Activated CD4-positive, alpha-beta memory T cell treated with anti-CD3 and anti-CD28 coated beads for 36 hours (primary cell): ENCODE measurements at regions of chr22 and their contacts with region 1.

Region 1: GRCh38 chr22:40463017-40463631 is 92.7 kb downstream of the SGSM3 start:
- DNase-seq: peak; percentile 69
- H3K4me3 Mint-ChIP-seq: peak overlapping the region; percentile 94
- H3K27ac Mint-ChIP-seq: peak overlapping the region; percentile 95
- H3K4me1 Mint-ChIP-seq: peaks cover 66% of the 10 kb centered on the region
- H3K27me3 Mint-ChIP-seq: no peaks in the 10 kb centered on the region

Region 2: GRCh38 chr22:40400159-40400558 is 63.0 kb before region 1 on chr22:
- CTCF ChIA-PET with region 1: no interaction called
- POLR2A ChIA-PET with region 1: no interaction called
- intact Hi-C with region 1: loop called (anchors 1 kb)
- DNase-seq: peak; percentile 75
- H3K4me3 Mint-ChIP-seq: no peak overlapping the region
- H3K27ac Mint-ChIP-seq: peak overlapping the region; percentile 70
- H3K4me1 Mint-ChIP-seq: peaks cover 61% of the 10 kb centered on the region
- H3K27me3 Mint-ChIP-seq: no peaks in the 10 kb centered on the region

Region 3: DNA sequence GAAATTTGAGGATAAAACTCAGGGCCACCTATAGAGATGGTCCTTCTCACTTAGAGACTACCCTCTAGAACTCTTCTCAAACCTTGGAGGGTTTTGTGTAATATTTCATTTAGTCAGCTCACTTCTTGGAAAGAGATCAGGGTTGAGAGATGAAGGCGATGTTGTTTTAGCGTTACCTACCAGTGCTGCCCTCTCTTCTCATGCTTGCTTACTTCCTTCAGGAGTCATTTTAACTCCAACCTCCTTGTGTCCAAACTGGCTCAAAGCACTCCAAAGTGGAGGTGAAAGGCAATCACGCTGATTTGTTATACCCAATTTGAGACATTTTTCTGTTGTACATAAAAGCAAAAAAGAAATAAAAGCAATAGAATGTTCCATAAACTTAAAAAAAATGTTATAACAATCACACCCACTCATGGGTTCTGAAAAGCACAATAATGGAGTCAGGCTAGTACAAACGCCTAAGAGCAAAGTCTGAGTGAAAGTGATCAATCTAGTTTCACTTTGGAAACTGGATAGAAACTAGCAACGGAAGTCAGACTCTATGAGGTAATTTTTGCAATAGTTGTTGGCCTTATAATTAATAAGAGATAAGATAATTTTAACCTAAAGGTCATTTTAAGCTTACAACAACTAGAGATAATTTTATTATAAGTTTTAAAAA is 56.3 kb after region 1 on chr22:
- CTCF ChIA-PET with region 1: no interaction called
- POLR2A ChIA-PET with region 1: no interaction called
- intact Hi-C with region 1: loop called (anchors 2 kb)
- DNase-seq: no peak
- H3K4me3 Mint-ChIP-seq: peak overlapping the region; percentile 60
- H3K27ac Mint-ChIP-seq: peak overlapping the region; percentile 91
- H3K4me1 Mint-ChIP-seq: peaks cover 32% of the 10 kb centered on the region
- H3K27me3 Mint-ChIP-seq: no peaks in the 10 kb centered on the region